HepG2 (cell line): ENCODE measurements at regions of chr3 and their contacts with region 1.

Region 1: DNA sequence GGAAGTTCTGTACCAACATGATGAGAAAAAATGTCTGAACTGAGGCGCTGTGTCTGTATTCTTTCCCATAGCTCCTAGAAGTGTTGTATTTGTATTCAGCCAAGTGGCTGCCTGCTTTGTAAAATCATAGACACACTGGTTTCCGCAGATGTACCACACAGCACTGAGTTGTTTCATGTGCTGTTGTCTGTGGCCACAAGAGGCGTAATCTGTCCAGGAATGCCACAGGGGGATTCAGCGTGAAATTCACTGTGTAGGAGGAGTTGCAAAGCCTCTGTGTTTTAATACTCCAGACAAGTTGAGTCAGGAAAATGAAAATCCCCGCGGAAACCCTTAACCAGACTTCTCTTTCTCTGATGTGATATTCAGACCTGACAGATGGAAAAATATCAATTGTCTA is 462.2 kb downstream of the NSUN3 start:
- DNase-seq: peak; percentile 60
- ATAC-seq: peak; percentile 97
- H3K4me3 ChIP-seq: peak overlapping the region in 1 of 3 experiments; percentile 19; a peak in 1 of 6 replicates
- H3K27ac ChIP-seq: no peak overlapping the region
- H3K4me1 ChIP-seq: peaks cover 27% of the 10 kb centered on the region
- H3K27me3 ChIP-seq: no peaks in the 10 kb centered on the region
- CTCF ChIP-seq: peak; percentile 82
- EP300 ChIP-seq: no peak
- POLR2A ChIP-seq: no peak
- RAD21 ChIP-seq: peak; percentile 42; the same call in 1 of the 2 replicates

Region 2: DNA sequence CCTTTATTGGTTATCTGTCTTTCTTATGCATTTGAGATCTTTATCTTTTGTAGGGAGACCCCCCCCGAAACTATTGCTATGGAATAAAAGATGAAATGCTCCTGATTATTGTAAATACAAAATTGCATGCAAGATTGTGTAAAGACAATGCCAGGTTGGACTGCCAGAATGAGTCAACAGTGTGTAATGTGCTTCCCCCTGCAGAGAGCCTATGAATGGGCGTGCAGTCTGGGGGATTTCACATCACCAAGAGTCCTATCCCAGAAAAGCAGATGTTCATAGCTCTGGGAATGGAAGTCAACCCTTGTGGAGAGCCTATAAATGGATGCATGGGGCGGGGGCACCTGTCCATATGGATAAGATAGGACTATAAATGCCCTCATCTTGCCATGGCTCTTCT is 122.1 kb after region 1 on chr3:
- CTCF ChIA-PET with region 1: no interaction called
- POLR2A ChIA-PET with region 1: no interaction called
- in situ Hi-C with region 1: no loop called
- intact Hi-C with region 1: loop called (anchors 10 kb)
- DNase-seq: peak; percentile 12
- ATAC-seq: no peak
- H3K4me3 ChIP-seq: no peak overlapping the region
- H3K27ac ChIP-seq: no peak overlapping the region
- H3K4me1 ChIP-seq: peaks cover 47% of the 10 kb centered on the region
- H3K27me3 ChIP-seq: no peaks in the 10 kb centered on the region
- CTCF ChIP-seq: no peak
- EP300 ChIP-seq: no peak
- POLR2A ChIP-seq: no peak
- RAD21 ChIP-seq: no peak